MCF 10A (cell line): ENCODE measurements at regions of chr15 and their contacts with region 1.

Region 1: GRCh38 chr15:23497710-23498111 is 50.7 kb upstream of the GOLGA6L2 start:
- DNase-seq: no peak
- H3K4me3 Mint-ChIP-seq: no peak overlapping the region
- H3K27ac Mint-ChIP-seq: no peak overlapping the region
- H3K4me1 Mint-ChIP-seq: no peaks in the 10 kb centered on the region
- H3K27me3 Mint-ChIP-seq: peaks cover 3% of the 10 kb centered on the region
- CTCF ChIP-seq: no peak

Region 2: DNA sequence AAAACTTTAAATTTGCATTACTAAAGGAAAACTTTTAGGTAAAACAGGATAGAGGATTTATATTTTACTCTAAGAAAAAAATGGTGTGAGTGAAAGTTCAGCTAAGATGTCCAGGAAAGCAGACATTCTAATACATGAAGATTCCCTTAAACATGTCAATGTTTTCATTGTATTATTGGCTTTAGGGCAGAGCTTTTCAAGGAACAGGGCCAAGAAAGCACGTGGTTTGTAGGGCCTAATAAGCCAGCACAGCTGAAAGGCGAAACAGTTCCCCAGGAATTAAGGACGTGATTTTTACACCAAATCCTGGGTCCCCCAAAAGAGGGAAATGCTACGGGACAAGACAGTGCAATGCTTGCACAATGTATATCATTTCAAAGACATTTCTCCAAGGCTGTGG is 19.2 kb after region 1 on chr15:
- CTCF ChIA-PET with region 1: interaction called, 25 read pairs
- POLR2A ChIA-PET with region 1: no interaction called
- intact Hi-C with region 1: no loop called
- DNase-seq: no peak
- H3K4me3 Mint-ChIP-seq: no peak overlapping the region
- H3K27ac Mint-ChIP-seq: no peak overlapping the region
- H3K4me1 Mint-ChIP-seq: no peaks in the 10 kb centered on the region
- H3K27me3 Mint-ChIP-seq: no peaks in the 10 kb centered on the region
- CTCF ChIP-seq: no peak

Region 3: DNA sequence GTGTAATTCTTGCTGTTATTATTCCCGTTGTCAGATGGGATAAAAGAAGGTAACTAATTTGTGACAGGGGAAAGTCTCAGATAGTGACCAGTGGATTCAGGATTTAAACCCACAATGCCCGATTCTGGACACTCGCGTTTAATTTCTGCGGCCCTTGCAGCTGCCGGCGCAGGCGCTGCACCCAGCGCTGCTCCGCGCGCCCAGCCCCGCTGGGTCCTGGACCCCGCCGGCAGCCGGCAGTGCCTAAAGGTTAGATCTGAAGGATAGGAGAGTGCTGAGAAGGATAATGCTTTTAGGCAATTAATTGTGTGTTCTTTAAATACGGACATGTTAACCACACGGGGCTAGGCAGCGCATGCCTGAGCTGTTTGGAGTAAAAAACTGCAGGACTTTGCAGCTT is 64.2 kb after region 1 on chr15:
- CTCF ChIA-PET with region 1: no interaction called
- POLR2A ChIA-PET with region 1: interaction called, 3 read pairs
- intact Hi-C with region 1: loop called (anchors 10 kb)
- DNase-seq: no peak
- H3K4me3 Mint-ChIP-seq: no peak overlapping the region
- H3K27ac Mint-ChIP-seq: no peak overlapping the region
- H3K4me1 Mint-ChIP-seq: no peaks in the 10 kb centered on the region
- H3K27me3 Mint-ChIP-seq: no peaks in the 10 kb centered on the region
- CTCF ChIP-seq: no peak

Region 4: GRCh38 chr15:23572844-23573243 is 75.1 kb after region 1 on chr15:
- CTCF ChIA-PET with region 1: interaction called, 11 read pairs
- POLR2A ChIA-PET with region 1: no interaction called
- intact Hi-C with region 1: no loop called
- DNase-seq: no peak
- H3K4me3 Mint-ChIP-seq: no peak overlapping the region
- H3K27ac Mint-ChIP-seq: no peak overlapping the region
- H3K4me1 Mint-ChIP-seq: no peaks in the 10 kb centered on the region
- H3K27me3 Mint-ChIP-seq: no peaks in the 10 kb centered on the region
- CTCF ChIP-seq: no peak

Region 5: DNA sequence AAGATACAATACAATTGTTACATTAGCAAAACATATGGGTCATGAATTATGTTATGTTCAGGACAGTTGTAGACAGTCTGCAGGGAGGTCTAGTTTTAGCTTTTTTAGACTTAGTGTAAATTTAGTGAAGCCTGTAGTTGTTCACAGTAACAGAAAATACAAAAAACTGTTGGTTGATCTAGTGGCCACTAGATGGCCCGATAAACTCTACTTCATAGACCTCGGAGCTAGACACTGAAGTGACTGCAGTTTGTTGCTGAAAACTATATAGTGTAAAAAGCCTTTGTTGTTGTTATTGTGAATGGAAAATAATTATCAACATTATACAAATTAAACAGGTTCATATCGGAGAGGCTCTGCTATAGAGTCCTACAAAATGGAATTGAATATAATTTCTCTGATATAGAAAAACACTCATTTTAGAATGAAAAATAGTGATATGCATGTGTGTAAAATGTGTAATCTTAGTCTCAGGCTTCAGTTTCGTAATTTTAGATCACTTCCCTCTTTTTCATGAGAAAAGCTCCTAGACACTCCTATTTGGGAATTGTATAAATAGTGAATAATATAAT is 131.6 kb after region 1 on chr15:
- CTCF ChIA-PET with region 1: interaction called, 10 read pairs
- POLR2A ChIA-PET with region 1: no interaction called
- intact Hi-C with region 1: loop called (anchors 10 kb)
- DNase-seq: no peak
- H3K4me3 Mint-ChIP-seq: no peak overlapping the region
- H3K27ac Mint-ChIP-seq: no peak overlapping the region
- H3K4me1 Mint-ChIP-seq: no peaks in the 10 kb centered on the region
- H3K27me3 Mint-ChIP-seq: no peaks in the 10 kb centered on the region
- CTCF ChIP-seq: peak; percentile 42

Region 6: GRCh38 chr15:23750776-23751175 is 253.1 kb after region 1 on chr15:
- CTCF ChIA-PET with region 1: no interaction called
- POLR2A ChIA-PET with region 1: no interaction called
- intact Hi-C with region 1: no loop called
- DNase-seq: no peak
- H3K4me3 Mint-ChIP-seq: no peak overlapping the region
- H3K27ac Mint-ChIP-seq: no peak overlapping the region
- H3K4me1 Mint-ChIP-seq: no peaks in the 10 kb centered on the region
- H3K27me3 Mint-ChIP-seq: no peaks in the 10 kb centered on the region
- CTCF ChIP-seq: no peak

Region 7: DNA sequence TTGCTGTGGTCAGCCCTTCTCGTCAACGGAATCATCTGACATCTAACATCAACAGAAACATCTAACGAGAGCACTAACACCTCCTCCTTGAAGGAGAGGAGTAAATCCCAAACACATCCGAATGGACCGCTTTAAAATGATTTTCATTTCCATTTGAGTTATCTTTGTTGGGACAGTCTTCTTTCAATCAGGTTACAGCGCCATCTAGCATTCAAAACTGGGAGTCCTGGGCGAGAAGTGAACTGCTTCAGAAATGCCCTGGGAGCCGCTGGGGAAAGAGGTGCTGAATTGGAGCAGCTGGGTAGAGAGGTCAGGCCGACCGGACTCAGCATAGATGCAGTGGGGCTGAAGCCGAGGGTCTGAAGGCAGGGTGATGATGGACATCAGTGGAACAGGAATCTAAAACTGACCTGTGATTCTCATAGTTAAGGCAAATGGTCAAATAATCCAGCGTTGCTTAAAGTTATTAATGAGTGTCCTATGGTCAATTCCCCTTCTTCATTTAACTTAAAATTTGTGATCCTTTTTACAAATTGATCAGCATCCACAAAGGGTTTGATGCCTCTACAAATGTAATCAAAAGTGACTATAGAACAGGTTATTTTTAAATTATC is 359.4 kb after region 1 on chr15:
- CTCF ChIA-PET with region 1: interaction called, 4 read pairs
- POLR2A ChIA-PET with region 1: no interaction called
- intact Hi-C with region 1: loop called (anchors 5 kb)
- DNase-seq: no peak
- H3K4me3 Mint-ChIP-seq: no peak overlapping the region
- H3K27ac Mint-ChIP-seq: no peak overlapping the region
- H3K4me1 Mint-ChIP-seq: no peaks in the 10 kb centered on the region
- H3K27me3 Mint-ChIP-seq: no peaks in the 10 kb centered on the region
- CTCF ChIP-seq: peak; percentile 17

Region 8: GRCh38 chr15:24848050-24848449 is 1350.3 kb after region 1 on chr15:
- CTCF ChIA-PET with region 1: no interaction called
- POLR2A ChIA-PET with region 1: no interaction called
- intact Hi-C with region 1: loop called (anchors 10 kb)
- DNase-seq: no peak
- H3K4me3 Mint-ChIP-seq: no peak overlapping the region
- H3K27ac Mint-ChIP-seq: no peak overlapping the region
- H3K4me1 Mint-ChIP-seq: no peaks in the 10 kb centered on the region
- H3K27me3 Mint-ChIP-seq: no peaks in the 10 kb centered on the region
- CTCF ChIP-seq: no peak